BJ (cell line): ENCODE measurements at regions of chr9 and their contacts with region 1.

Region 1: DNA sequence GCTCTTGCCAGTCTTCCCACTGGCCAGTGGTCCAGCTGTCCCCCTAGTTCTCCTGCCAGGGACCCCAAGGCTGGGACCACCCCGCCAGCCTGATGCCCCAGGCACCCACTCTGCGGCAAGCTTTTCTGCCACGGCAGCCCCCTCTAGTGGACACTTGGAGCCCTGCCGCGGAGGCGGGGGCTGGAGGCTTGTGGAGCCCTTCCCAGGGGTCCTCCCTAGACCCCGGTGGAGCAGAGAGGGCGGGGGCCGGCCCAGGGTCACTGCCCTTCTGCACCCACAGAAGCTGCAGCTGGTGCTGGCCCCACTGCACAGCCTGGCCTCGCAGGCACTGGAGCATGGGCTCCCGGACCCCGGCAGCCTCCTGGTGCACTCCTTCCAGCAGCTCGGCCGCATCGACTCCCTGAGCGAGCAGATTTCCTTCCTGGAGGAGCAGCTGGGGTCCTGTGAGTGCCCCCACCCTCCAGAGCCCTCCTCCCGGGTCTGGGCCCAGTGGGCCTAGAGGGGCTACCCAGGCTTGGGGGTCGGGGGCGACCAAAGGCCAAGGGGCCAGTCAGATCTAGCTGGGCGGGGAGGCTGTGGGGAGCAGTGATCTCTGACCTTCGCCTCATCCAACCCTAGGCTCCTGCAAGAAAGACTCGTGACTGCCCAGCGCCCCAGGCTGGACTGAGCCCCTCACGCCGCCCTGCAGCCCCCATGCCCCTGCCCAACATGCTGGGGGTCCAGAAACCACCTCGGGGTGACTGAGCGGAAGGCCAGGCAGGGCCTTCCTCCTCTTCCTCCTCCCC is 9.1 kb downstream of the EGFL7 start:
- DNase-seq: no peak
- H3K4me3 ChIP-seq: no peak overlapping the region
- H3K27me3 ChIP-seq: no peaks in the 10 kb centered on the region
- CTCF ChIP-seq: peak; percentile 93

Region 2: DNA sequence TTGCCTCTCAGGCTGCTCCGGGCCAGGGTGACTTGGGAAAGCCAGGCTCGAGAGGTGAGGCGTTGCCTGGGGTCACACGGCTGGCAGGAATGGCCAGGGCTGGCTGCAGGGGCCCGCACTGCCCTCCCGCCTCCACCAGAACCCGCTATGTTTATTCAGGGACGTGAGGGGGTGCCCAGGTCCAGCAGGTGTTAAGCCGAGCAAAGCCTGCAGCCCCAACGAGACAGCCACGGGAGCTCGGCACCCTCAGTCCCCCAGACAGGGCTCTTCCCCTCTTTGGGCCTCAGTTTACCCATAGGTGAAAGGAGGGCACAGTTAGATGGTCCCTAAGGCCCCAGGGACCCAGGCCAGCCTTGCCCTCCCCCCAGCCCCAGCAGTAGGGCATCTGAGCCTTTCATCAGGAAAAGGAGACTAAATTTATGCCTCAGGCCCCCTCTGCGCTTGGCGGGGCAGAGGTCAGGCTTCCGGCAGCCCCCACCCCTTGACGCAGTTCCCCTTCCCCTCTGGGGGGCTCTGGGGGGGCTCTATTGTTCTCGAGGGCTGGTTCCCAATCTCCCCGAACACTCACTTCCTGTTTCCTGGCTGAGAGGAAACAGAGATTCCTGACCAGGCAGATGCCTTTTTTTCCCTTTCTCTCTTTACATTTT is 16.2 kb before region 1 on chr9:
- CTCF ChIA-PET with region 1: interaction called, 15 read pairs
- POLR2A ChIA-PET with region 1: no interaction called
- DNase-seq: no peak
- H3K4me3 ChIP-seq: no peak overlapping the region
- H3K27me3 ChIP-seq: peaks cover 5% of the 10 kb centered on the region; the same call in 1 of the 2 replicates
- CTCF ChIP-seq: no peak

Region 3: GRCh38 chr9:136686794-136687711 is 15.2 kb after region 1 on chr9 and contains the start of gene AGPAT2:
- CTCF ChIA-PET with region 1: interaction called, 47 read pairs
- POLR2A ChIA-PET with region 1: no interaction called
- DNase-seq: no peak
- H3K4me3 ChIP-seq: peak within 1 kb of the TSS; percentile 89
- H3K27me3 ChIP-seq: no peaks in the 10 kb centered on the region
- CTCF ChIP-seq: no peak
- polyA plus RNA-seq, gene AGPAT2: 48.3 and 68.3 TPM in 2 replicates

Region 4: DNA sequence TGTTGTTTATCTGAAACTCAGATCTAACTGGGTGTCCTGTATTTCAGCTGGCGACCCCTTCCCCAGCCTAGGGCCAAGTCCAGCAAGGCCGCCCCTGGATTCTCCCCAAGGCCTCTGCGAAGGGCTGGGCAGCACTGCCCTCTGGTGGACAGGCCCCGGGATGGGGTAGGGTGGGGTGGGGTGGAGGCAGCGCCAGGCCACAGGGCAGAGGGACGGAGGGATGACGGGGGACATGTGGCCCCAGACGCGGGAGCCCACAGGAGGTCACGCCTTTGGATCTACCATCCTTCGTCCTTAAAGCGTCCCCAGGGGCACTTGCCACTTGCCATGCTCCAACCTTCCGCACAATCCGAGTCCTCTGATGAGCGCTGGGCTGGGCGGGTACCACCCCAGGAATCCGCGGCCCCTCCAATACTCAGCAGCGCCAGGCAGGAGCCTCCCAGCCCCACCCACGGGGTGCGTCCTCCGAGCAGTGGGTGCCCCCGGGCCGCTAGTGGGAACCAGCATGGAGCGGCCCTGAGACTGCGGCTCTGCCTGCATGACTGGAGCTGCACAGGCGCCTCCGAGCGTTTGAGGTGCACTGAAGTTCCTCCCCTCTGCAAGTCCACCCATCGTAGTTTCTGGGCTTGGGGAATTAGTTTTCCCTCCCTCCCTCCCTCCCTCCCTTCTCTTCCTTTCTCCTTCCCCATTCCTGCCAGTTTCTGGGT is 22.6 kb after region 1 on chr9:
- CTCF ChIA-PET with region 1: interaction called, 11 read pairs
- POLR2A ChIA-PET with region 1: no interaction called
- DNase-seq: no peak
- H3K4me3 ChIP-seq: no peak overlapping the region
- H3K27me3 ChIP-seq: peaks cover 6% of the 10 kb centered on the region
- CTCF ChIP-seq: peak; percentile 91

Region 5: GRCh38 chr9:136728080-136728547 is 56.3 kb after region 1 on chr9:
- CTCF ChIA-PET with region 1: interaction called, 10 read pairs
- POLR2A ChIA-PET with region 1: interaction called, 3 read pairs
- DNase-seq: peak; percentile 18
- H3K4me3 ChIP-seq: peak overlapping the region; percentile 97
- H3K27me3 ChIP-seq: no peaks in the 10 kb centered on the region
- CTCF ChIP-seq: peak; percentile 72